ENCODE measurements at regions of chr7 and their contacts with region 1.

Region 1: GRCh38 chr7:26686448-26686981 is 177.9 kb downstream of the SKAP2 start:
- DNase-seq: peak; percentile 51 to 72
- H3K4me3 ChIP-seq: no peak overlapping the region
- H3K4me3 Mint-ChIP-seq: no peak overlapping the region
- H3K27ac Mint-ChIP-seq: peak overlapping the region; percentile 73
- H3K4me1 ChIP-seq: peaks cover 58% of the 10 kb centered on the region
- H3K4me1 Mint-ChIP-seq: peaks cover 32% of the 10 kb centered on the region
- H3K27me3 ChIP-seq: no peaks in the 10 kb centered on the region
- H3K27me3 Mint-ChIP-seq: no peaks in the 10 kb centered on the region
- CTCF ChIP-seq: peak; percentile 52 to 66

Region 2: GRCh38 chr7:26538689-26539088 is 147.8 kb before region 1 on chr7:
- CTCF ChIA-PET with region 1: no interaction called
- POLR2A ChIA-PET with region 1: no interaction called
- intact Hi-C with region 1: no loop called
- DNase-seq: no peak
- H3K4me3 ChIP-seq: no peak overlapping the region
- H3K4me3 Mint-ChIP-seq: no peak overlapping the region
- H3K27ac Mint-ChIP-seq: no peak overlapping the region
- H3K4me1 ChIP-seq: no peaks in the 10 kb centered on the region
- H3K4me1 Mint-ChIP-seq: no peaks in the 10 kb centered on the region
- H3K27me3 ChIP-seq: no peaks in the 10 kb centered on the region; the same call in 1 of the 2 replicates
- H3K27me3 Mint-ChIP-seq: peaks cover 35% of the 10 kb centered on the region
- CTCF ChIP-seq: no peak

Region 3: GRCh38 chr7:26759108-26759507 is 72.6 kb after region 1 on chr7:
- CTCF ChIA-PET with region 1: no interaction called
- POLR2A ChIA-PET with region 1: no interaction called
- intact Hi-C with region 1: loop called (anchors 1 kb)
- DNase-seq: peak in 1 of 2 experiments; percentile 20
- H3K4me3 ChIP-seq: no peak overlapping the region
- H3K4me3 Mint-ChIP-seq: no peak overlapping the region
- H3K27ac Mint-ChIP-seq: no peak overlapping the region
- H3K4me1 ChIP-seq: no peaks in the 10 kb centered on the region
- H3K4me1 Mint-ChIP-seq: no peaks in the 10 kb centered on the region
- H3K27me3 ChIP-seq: no peaks in the 10 kb centered on the region
- H3K27me3 Mint-ChIP-seq: no peaks in the 10 kb centered on the region
- CTCF ChIP-seq: no peak

Region 4: DNA sequence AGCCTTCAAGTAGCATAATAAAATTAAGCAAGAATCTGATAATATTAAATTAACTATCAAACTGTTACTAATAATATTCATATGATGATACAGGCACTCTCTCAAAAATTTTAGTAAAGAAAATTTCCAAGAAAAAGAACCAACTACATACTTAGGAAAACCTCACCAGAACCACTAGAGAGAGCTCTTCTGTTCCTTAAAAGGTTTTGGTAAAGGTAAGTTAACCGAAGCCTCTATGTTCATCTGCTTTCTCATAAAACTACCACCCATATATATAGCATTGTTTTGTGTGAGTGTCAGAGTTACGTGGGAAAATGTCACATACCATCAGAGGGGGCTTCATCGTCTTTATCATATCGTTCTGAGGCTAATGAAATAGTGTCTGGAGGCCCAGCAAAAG is 157.2 kb after region 1 on chr7:
- CTCF ChIA-PET with region 1: no interaction called
- POLR2A ChIA-PET with region 1: no interaction called
- intact Hi-C with region 1: loop called (anchors 1 kb)
- DNase-seq: no peak
- H3K4me3 ChIP-seq: no peak overlapping the region
- H3K4me3 Mint-ChIP-seq: no peak overlapping the region
- H3K27ac Mint-ChIP-seq: no peak overlapping the region
- H3K4me1 ChIP-seq: no peaks in the 10 kb centered on the region
- H3K4me1 Mint-ChIP-seq: no peaks in the 10 kb centered on the region
- H3K27me3 ChIP-seq: no peaks in the 10 kb centered on the region
- H3K27me3 Mint-ChIP-seq: no peaks in the 10 kb centered on the region
- CTCF ChIP-seq: peak in 1 of 2 experiments; percentile 52

Region 5: DNA sequence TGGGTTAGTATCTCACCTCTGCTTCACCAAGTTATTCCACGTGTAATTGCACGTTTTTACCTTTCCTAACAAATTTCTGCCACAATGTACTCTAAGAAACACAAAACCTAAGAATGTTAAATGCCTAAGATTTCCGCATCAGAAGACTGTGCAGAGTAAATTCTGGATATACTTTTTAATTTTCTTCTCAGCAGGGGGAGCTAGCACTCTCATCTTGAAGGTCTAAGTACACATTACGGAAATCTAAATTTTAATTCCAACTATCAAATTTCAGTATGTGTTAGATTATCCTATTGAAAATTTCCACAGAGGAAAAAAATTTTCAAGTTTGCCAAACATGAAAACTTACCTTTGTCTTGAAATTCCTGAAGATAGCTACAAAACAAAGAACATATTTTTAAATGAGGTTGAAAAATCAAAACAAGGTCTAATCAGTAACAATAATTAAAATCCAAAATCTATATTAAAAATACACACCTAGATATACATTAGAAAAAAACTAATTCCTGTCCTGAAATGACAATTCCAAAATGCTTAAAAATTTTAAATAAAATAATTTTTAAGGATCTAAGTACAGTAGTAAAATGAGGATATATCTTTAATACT is 167.4 kb after region 1 on chr7:
- CTCF ChIA-PET with region 1: no interaction called
- POLR2A ChIA-PET with region 1: no interaction called
- intact Hi-C with region 1: loop called (anchors 2 kb)
- DNase-seq: peak in 1 of 2 experiments; percentile 45
- H3K4me3 ChIP-seq: no peak overlapping the region
- H3K4me3 Mint-ChIP-seq: no peak overlapping the region
- H3K27ac Mint-ChIP-seq: no peak overlapping the region
- H3K4me1 ChIP-seq: no peaks in the 10 kb centered on the region
- H3K4me1 Mint-ChIP-seq: no peaks in the 10 kb centered on the region
- H3K27me3 ChIP-seq: no peaks in the 10 kb centered on the region
- H3K27me3 Mint-ChIP-seq: no peaks in the 10 kb centered on the region
- CTCF ChIP-seq: peak; percentile 47 to 64

Region 6: DNA sequence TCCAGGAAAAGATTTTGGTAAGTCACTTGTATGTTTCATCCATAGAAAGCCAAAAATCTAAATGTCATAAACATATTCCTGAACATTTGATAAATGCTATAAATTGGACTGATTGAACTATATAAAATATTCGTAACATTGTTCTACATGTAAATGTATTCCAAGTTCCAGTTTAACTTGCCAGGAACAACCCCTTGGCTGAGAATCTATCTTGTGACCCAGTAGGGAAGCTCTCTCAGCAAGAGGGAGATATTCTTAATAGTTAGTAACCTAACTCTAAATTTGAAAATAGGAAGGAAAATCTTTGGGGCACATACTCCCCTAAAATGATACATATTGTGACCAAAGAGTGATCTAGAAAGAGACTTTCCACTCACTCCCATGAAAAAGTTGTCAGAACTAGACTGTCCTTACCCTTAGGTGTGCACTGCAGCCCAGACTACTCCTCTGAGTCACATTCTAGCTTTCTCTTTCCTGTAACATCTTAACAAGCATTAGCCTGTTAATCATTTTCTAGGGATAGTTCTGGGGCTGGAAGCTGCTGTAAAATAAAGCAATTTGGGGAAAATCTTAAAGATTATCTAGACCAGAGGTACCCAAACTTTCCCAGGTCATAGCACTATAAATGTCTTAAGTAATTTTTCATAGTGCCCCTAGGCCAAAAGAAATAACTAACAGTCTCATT is 251.6 kb after region 1 on chr7:
- CTCF ChIA-PET with region 1: no interaction called
- POLR2A ChIA-PET with region 1: no interaction called
- intact Hi-C with region 1: loop called (anchors 2 kb)
- DNase-seq: peak in 1 of 2 experiments; percentile 19
- H3K4me3 ChIP-seq: no peak overlapping the region
- H3K4me3 Mint-ChIP-seq: no peak overlapping the region
- H3K27ac Mint-ChIP-seq: no peak overlapping the region
- H3K4me1 ChIP-seq: peaks cover 5% of the 10 kb centered on the region; the same call in 1 of the 2 replicates
- H3K4me1 Mint-ChIP-seq: peaks cover 8% of the 10 kb centered on the region
- H3K27me3 ChIP-seq: no peaks in the 10 kb centered on the region
- H3K27me3 Mint-ChIP-seq: peaks cover 4% of the 10 kb centered on the region
- CTCF ChIP-seq: no peak

Region 7: DNA sequence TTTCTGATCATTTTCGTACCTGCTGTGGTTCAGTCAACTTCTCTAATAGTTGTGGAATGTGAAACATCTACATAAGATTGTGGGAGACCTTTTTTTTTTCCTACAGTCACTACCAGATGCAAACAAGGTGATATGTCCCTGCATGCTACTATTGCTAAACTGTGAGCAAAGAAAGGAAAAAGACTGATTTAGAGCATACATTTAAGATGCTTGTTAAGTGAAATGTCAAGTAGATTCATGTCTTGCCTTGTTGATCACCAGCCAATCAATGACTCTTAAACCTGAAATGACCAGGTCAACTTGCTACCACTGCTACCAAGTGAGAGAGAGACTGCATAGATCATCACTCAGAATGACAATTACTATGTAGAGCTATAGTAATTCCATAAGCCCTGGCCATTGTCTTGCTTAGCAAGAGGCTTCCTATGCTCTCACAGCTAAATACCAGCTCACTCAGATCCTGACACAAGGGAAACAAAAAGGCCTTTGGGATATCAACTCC is 262.2 kb after region 1 on chr7:
- CTCF ChIA-PET with region 1: no interaction called
- POLR2A ChIA-PET with region 1: no interaction called
- intact Hi-C with region 1: loop called (anchors 2 kb)
- DNase-seq: peak in 1 of 2 experiments; percentile 6
- H3K4me3 ChIP-seq: no peak overlapping the region
- H3K4me3 Mint-ChIP-seq: no peak overlapping the region
- H3K27ac Mint-ChIP-seq: no peak overlapping the region
- H3K4me1 ChIP-seq: peaks cover 23% of the 10 kb centered on the region
- H3K4me1 Mint-ChIP-seq: peaks cover 18% of the 10 kb centered on the region
- H3K27me3 ChIP-seq: no peaks in the 10 kb centered on the region
- H3K27me3 Mint-ChIP-seq: no peaks in the 10 kb centered on the region
- CTCF ChIP-seq: no peak

Region 8: DNA sequence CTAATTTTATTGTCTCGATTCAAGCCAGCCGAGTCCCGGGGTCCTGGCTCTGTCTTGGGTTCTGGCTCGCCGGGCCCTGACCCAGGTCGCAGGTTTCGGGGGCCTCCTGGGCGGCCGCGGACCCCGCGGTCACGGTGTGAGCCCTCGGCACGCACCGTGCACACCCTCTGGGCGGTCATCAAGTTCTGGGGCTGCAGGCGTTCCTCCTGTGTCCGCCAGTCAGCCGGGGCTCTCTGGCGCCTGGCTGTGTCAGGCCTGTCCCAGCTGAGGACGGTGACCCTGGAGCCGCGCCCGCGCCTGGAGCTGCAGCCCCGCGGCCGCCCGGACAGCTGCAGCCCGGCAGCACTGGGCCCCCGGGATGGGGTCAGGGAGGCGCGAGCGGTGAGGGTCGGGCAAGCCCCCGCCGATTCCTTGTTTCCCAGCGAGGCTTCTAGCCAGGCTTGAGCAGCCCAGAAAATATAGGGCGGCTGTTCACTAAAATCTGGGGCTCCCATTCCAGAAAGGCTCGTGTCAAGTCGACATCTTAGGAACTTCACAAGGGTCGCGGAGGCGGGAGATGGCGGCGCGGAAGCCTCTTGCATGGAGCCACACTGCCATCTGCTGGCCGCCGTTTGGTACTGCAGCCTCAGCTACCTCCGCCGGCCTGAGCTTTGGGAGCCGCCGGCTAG is 474.2 kb after region 1 on chr7:
- CTCF ChIA-PET with region 1: interaction called, 7 read pairs
- POLR2A ChIA-PET with region 1: no interaction called
- intact Hi-C with region 1: loop called (anchors 2 kb)
- DNase-seq: peak; percentile 84 to 93
- H3K4me3 ChIP-seq: peak overlapping the region; percentile 73
- H3K4me3 Mint-ChIP-seq: peak overlapping the region; percentile 77
- H3K27ac Mint-ChIP-seq: no peak overlapping the region
- H3K4me1 ChIP-seq: peaks cover 7% of the 10 kb centered on the region
- H3K4me1 Mint-ChIP-seq: peaks cover 14% of the 10 kb centered on the region
- H3K27me3 ChIP-seq: no peaks in the 10 kb centered on the region
- H3K27me3 Mint-ChIP-seq: no peaks in the 10 kb centered on the region
- CTCF ChIP-seq: peak; percentile 94 to 98

Measured in Caco-2 (cell line).